ENCODE measurements at regions of chr6 and their contacts with region 1.

Region 1: DNA sequence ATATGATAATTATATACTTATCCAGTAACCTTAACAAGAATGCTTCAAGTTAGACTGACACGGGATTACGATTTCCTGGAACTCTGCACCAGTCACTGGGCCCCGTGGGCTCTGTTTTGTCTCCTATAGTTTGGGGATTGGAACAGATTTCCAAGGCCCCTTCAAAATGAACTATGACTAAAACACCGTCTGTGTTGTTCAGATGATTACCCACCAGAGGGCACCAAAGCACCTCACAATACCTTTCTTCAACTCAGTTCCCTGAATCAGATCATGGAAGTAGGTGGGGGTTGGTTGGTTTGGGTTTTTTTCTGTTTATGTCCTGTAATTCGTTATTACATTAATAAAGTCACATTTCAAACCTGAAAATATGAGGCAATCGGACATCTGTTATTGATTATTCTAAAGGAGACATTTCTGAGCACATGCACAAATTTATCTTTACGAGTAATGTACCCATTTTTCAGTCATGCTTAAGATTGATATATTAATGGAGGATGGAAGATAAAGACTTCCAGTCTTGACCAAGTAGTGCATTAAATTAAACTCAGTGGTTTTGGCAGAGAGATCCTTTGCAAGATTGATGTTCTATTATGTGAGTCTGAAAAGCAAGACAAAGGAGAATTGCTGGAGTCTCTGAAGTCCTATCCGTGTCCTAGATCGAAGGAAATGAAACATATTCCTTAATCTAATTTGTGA is 112.0 kb upstream of the COL21A1 start:
- DNase-seq: peak; percentile 63 to 75 (median 67)
- ATAC-seq: peak; percentile 93
- H3K4me3 ChIP-seq: no peak overlapping the region
- H3K27ac ChIP-seq: no peak overlapping the region
- H3K4me1 ChIP-seq: no peaks in the 10 kb centered on the region
- H3K27me3 ChIP-seq: no peaks in the 10 kb centered on the region; a peak in 2 of 5 replicates
- CTCF ChIP-seq: peak; percentile 65 to 84 (median 76)
- EP300 ChIP-seq: no peak
- POLR2A ChIP-seq: no peak
- RAD21 ChIP-seq: peak; percentile 93 to 96

Region 2: DNA sequence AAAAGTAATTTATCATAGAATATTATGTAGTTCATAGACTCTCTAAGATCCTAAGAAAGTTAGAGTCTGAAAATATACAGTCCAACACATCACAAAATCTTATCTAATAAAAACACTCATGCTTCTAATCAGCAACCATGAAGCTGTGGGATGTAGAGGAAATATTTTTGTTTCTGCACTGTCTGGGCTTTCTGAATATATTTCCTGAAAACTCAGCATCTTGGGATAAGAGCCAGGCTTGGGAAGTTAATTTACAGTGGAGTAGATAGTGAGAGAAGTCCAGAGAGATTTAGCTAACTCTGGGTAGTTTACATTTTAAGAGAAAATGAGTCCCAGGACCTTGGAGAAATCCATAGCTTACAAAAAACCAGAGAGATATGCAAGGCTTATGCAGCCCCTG is 333.6 kb before region 1 on chr6:
- CTCF ChIA-PET with region 1: no interaction called
- POLR2A ChIA-PET with region 1: no interaction called
- in situ Hi-C with region 1: no loop called
- intact Hi-C with region 1: no loop called
- DNase-seq: no peak
- ATAC-seq: no peak
- H3K4me3 ChIP-seq: no peak overlapping the region
- H3K27ac ChIP-seq: no peak overlapping the region
- H3K4me1 ChIP-seq: no peaks in the 10 kb centered on the region
- H3K27me3 ChIP-seq: no peaks in the 10 kb centered on the region
- CTCF ChIP-seq: no peak
- EP300 ChIP-seq: no peak
- POLR2A ChIP-seq: no peak
- RAD21 ChIP-seq: no peak

Region 3: GRCh38 chr6:56549014-56549413 is 189.7 kb after region 1 on chr6:
- CTCF ChIA-PET with region 1: interaction called, 17 read pairs
- POLR2A ChIA-PET with region 1: no interaction called
- in situ Hi-C with region 1: no loop called
- intact Hi-C with region 1: loop called (anchors 1 kb)
- DNase-seq: peak in 1 of 4 experiments; percentile 19
- ATAC-seq: peak; percentile 78
- H3K4me3 ChIP-seq: no peak overlapping the region
- H3K27ac ChIP-seq: no peak overlapping the region
- H3K4me1 ChIP-seq: 0 out of 5 replicates have a peak, but pooled peaks cover 0 to 4% of the 10 kb centered on the region in 2 experiments
- H3K27me3 ChIP-seq: no peaks in the 10 kb centered on the region
- CTCF ChIP-seq: peak in 2 of 3 experiments; percentile 29 to 60; a peak in 3 of 6 replicates
- EP300 ChIP-seq: no peak
- POLR2A ChIP-seq: no peak
- RAD21 ChIP-seq: peak; percentile 71 to 90

Region 4: DNA sequence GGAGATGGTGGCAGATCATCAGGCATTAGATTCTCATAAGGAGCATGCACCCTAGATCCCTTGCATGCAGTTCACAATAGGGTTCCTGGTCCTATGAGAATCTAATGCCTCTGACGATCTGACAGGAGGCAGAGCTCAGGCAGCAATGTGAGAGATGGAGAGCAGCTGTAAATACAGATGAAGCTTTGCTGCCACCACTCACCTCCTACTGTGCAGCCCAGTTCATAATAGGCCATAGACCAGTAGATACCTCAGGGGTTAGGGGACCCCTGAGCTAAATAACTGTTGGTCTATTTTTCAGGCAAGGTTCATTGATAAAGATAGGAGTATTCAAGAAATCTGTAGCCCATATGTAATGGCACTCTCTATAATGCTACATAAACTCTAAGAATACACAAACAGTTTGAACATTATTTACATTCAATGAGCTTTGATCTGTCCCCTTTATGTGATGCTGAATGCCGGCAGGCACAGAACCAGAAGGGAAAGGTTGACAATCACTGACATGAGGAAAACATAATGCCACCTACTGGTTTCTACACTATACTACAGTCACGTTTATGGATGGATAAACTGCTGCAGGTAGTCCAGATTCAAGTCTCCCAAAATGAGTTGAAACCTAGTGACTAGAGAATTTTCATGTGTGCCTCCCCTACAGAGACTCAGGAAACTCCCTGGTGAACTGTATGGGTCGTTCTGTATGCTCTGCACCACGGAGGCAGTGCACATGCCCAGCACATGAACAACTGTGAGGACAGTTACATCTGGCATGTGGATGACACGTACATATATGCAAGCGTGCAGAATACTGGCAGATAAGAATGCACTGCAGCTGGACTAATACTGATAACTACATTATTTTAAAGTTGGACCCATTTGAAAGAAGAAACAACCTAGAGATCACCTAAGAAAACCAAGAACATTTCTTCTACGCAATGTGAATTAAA is 211.3 kb after region 1 on chr6:
- CTCF ChIA-PET with region 1: interaction called, 4 read pairs
- POLR2A ChIA-PET with region 1: no interaction called
- in situ Hi-C with region 1: no loop called
- intact Hi-C with region 1: loop called (anchors 1 kb)
- DNase-seq: peak in 2 of 4 experiments; percentile 38 to 39
- ATAC-seq: peak; percentile 89
- H3K4me3 ChIP-seq: no peak overlapping the region
- H3K27ac ChIP-seq: no peak overlapping the region
- H3K4me1 ChIP-seq: no peaks in the 10 kb centered on the region
- H3K27me3 ChIP-seq: no peaks in the 10 kb centered on the region
- CTCF ChIP-seq: peak; percentile 32 to 62 (median 60)
- EP300 ChIP-seq: no peak
- POLR2A ChIP-seq: no peak
- RAD21 ChIP-seq: peak; percentile 25 to 69; a peak in 3 of 4 replicates

Region 5: GRCh38 chr6:56595490-56596122 is 236.3 kb after region 1 on chr6:
- CTCF ChIA-PET with region 1: interaction called, 24 read pairs
- POLR2A ChIA-PET with region 1: no interaction called
- in situ Hi-C with region 1: loop called (anchors 5 kb)
- intact Hi-C with region 1: loop called (anchors 1 kb)
- DNase-seq: peak; percentile 45 to 67 (median 46)
- ATAC-seq: peak; percentile 94
- H3K4me3 ChIP-seq: no peak overlapping the region
- H3K27ac ChIP-seq: no peak overlapping the region
- H3K4me1 ChIP-seq: no peaks in the 10 kb centered on the region
- H3K27me3 ChIP-seq: no peaks in the 10 kb centered on the region
- CTCF ChIP-seq: peak; percentile 55 to 66 (median 62)
- EP300 ChIP-seq: no peak
- POLR2A ChIP-seq: no peak
- RAD21 ChIP-seq: peak; percentile 30 to 66; a peak in 2 of 4 replicates

Region 6: GRCh38 chr6:56699066-56699654 is 339.8 kb after region 1 on chr6:
- CTCF ChIA-PET with region 1: interaction called, 5 read pairs
- POLR2A ChIA-PET with region 1: no interaction called
- in situ Hi-C with region 1: no loop called
- intact Hi-C with region 1: loop called (anchors 2 kb)
- DNase-seq: peak in 2 of 4 experiments; percentile 7 to 8
- ATAC-seq: peak; percentile 59; the same call in 2 of the 3 replicates
- H3K4me3 ChIP-seq: no peak overlapping the region
- H3K27ac ChIP-seq: no peak overlapping the region
- H3K4me1 ChIP-seq: no peaks in the 10 kb centered on the region
- H3K27me3 ChIP-seq: no peaks in the 10 kb centered on the region
- CTCF ChIP-seq: peak in 1 of 3 experiments; percentile 52; a peak in 2 of 6 replicates
- EP300 ChIP-seq: no peak
- POLR2A ChIP-seq: no peak
- RAD21 ChIP-seq: peak; percentile 62 to 64

Region 7: GRCh38 chr6:56843573-56844349 is 484.4 kb after region 1 on chr6:
- CTCF ChIA-PET with region 1: no interaction called
- POLR2A ChIA-PET with region 1: no interaction called
- in situ Hi-C with region 1: no loop called
- intact Hi-C with region 1: loop called (anchors 10 kb)
- DNase-seq: peak; percentile 40 to 70 (median 56)
- ATAC-seq: peak; percentile 99
- H3K4me3 ChIP-seq: peak overlapping the region; percentile 20; the same call in 1 of the 2 replicates
- H3K27ac ChIP-seq: no peak overlapping the region
- H3K4me1 ChIP-seq: peaks cover 0 to 13% of the 10 kb centered on the region in 2 experiments; a peak in 3 of 5 replicates
- H3K27me3 ChIP-seq: peaks cover 8 to 16% of the 10 kb centered on the region in 2 experiments; a peak in 4 of 5 replicates
- CTCF ChIP-seq: peak; percentile 45 to 68 (median 55); a peak in 5 of 6 replicates
- EP300 ChIP-seq: no peak
- POLR2A ChIP-seq: no peak
- RAD21 ChIP-seq: peak in 1 of 2 experiments; percentile 35; a peak in 2 of 4 replicates

Region 8: GRCh38 chr6:56851541-56852259 is 492.4 kb after region 1 on chr6:
- CTCF ChIA-PET with region 1: no interaction called
- POLR2A ChIA-PET with region 1: no interaction called
- in situ Hi-C with region 1: loop called (anchors 25 kb)
- intact Hi-C with region 1: loop called (anchors 10 kb)
- DNase-seq: peak in 2 of 4 experiments; percentile 40 to 55
- ATAC-seq: peak; percentile 92
- H3K4me3 ChIP-seq: no peak overlapping the region
- H3K27ac ChIP-seq: no peak overlapping the region
- H3K4me1 ChIP-seq: no peaks in the 10 kb centered on the region; a peak in 1 of 5 replicates
- H3K27me3 ChIP-seq: no peaks in the 10 kb centered on the region
- CTCF ChIP-seq: peak; percentile 47 to 70 (median 59); a peak in 5 of 6 replicates
- EP300 ChIP-seq: no peak
- POLR2A ChIP-seq: no peak
- RAD21 ChIP-seq: peak; percentile 60 to 73